ENCODE measurements at regions of chr16 and their contacts with region 1.

Region 1: DNA sequence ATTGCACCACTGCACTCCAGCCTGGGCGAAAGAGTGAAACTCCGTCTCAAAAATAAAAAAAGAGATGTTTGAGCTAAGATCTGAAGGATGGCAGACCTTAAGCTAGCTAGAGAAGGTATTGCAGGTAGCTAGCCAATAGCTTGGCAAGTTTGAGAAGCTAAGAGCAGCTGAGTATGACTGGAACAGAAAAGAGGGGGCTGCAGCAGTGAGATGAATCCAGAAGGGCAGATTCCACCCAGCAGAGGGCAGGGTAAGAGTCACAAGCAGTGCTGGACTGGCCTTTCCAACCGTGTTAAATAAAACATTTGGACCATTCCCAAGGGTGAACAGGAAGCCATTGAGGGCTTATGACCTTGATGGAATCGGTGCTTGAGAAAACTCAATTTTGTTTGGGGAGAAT is 5.7 kb upstream of the PHAF1 start:
- DNase-seq: peak; percentile 16
- ATAC-seq: peak; percentile 42
- H3K4me3 Mint-ChIP-seq: no peak overlapping the region
- H3K27ac Mint-ChIP-seq: no peak overlapping the region
- H3K4me1 Mint-ChIP-seq: peaks cover 5% of the 10 kb centered on the region
- H3K27me3 Mint-ChIP-seq: no peaks in the 10 kb centered on the region

Region 2: DNA sequence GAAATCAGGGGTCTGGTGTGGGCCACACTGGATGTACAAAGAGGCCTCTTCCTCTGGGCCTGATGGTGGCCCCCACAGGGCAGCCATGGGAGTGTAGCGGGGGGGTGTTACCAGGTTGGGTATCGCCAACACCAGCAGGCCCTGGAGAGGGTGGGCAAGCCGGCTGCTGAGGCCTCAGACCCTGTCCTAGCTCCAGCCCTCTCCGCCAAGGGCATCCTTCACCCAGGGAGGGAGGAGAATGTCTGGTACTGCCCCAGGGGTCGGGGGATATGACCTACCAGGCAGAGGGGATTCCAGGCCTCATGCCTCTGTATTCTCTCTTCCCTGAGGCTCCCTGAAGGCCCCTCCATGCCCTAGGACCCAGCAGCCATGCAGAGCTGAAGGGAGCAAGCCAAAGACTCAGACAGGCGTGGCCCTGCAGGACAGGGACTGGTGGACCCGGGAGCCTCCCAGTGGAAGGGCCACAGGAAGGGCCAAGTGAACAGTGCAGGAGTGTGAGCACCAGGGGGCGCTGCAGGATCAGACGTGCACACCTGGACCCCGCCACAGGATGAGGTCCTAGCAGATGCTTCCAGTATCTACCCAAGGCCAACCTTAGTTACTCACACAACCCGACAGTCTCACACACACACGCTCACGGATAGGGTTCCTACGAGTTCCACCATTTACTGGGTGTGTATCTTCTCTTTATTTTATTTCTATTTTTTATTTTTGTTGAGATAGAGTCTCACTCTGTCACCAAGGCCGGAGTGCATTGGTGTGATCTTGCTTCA is 126.5 kb before region 1 on chr16:
- CTCF ChIA-PET with region 1: interaction called, 3 read pairs
- POLR2A ChIA-PET with region 1: no interaction called
- intact Hi-C with region 1: loop called (anchors 1 kb)
- DNase-seq: peak; percentile 96
- ATAC-seq: peak; percentile 97
- H3K4me3 Mint-ChIP-seq: no peak overlapping the region
- H3K27ac Mint-ChIP-seq: peak overlapping the region; percentile 31
- H3K4me1 Mint-ChIP-seq: peaks cover 31% of the 10 kb centered on the region
- H3K27me3 Mint-ChIP-seq: peaks cover 3% of the 10 kb centered on the region

Region 3: DNA sequence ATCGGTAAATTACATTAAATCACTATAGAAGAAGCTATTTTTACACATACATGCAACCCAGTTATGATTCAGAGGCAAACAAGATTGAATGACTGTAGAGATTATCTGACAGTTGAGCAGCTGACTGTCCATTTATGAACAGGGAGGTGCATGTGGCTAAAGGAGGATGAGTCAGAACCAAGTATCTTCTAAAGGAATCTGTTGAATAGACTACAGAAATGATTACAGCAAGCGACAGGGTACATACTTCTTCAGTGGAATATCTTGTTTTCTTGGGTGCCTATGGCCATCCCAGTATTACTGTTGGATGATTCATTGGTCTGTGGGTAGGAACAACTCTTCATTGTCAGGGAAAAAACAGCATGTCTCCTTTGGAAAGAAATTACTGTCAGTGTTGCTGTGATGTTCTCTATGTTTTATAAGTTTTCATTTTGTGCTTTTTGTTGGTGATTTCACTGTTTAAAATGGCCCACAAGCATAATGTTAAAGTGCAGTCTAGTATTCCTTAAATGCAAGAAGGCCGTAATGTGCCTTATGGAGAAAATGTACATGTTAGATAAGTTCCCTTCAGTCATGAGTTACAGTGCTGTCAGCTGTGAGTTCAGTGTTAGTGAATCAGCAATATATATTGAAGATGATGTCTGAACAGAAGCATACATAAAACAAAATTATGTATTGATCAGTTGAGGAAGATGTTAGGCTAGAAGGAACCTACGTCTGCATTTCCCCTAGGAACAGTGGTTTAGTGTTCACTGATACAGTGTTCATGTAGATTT is 48.2 kb before region 1 on chr16:
- CTCF ChIA-PET with region 1: interaction called, 6 read pairs
- POLR2A ChIA-PET with region 1: no interaction called
- intact Hi-C with region 1: loop called (anchors 1 to 5 kb)
- DNase-seq: peak; percentile 34
- ATAC-seq: peak; percentile 89
- H3K4me3 Mint-ChIP-seq: peak overlapping the region; percentile 6
- H3K27ac Mint-ChIP-seq: peak overlapping the region; percentile 84
- H3K4me1 Mint-ChIP-seq: peaks cover 50% of the 10 kb centered on the region
- H3K27me3 Mint-ChIP-seq: no peaks in the 10 kb centered on the region

Region 4: GRCh38 chr16:67082891-67083290 is 21.2 kb before region 1 on chr16:
- CTCF ChIA-PET with region 1: interaction called, 14 read pairs
- POLR2A ChIA-PET with region 1: no interaction called
- intact Hi-C with region 1: no loop called
- DNase-seq: no peak
- ATAC-seq: no peak
- H3K4me3 Mint-ChIP-seq: no peak overlapping the region
- H3K27ac Mint-ChIP-seq: no peak overlapping the region
- H3K4me1 Mint-ChIP-seq: no peaks in the 10 kb centered on the region
- H3K27me3 Mint-ChIP-seq: no peaks in the 10 kb centered on the region

Region 5: GRCh38 chr16:67115639-67116038 is 11.6 kb after region 1 on chr16:
- CTCF ChIA-PET with region 1: interaction called, 10 read pairs
- POLR2A ChIA-PET with region 1: interaction called, 3 read pairs
- intact Hi-C with region 1: no loop called
- DNase-seq: no peak
- ATAC-seq: no peak
- H3K4me3 Mint-ChIP-seq: no peak overlapping the region
- H3K27ac Mint-ChIP-seq: no peak overlapping the region
- H3K4me1 Mint-ChIP-seq: peaks cover 27% of the 10 kb centered on the region
- H3K27me3 Mint-ChIP-seq: no peaks in the 10 kb centered on the region

Region 6: GRCh38 chr16:67726106-67727034 is 622.3 kb after region 1 on chr16:
- CTCF ChIA-PET with region 1: no interaction called
- POLR2A ChIA-PET with region 1: no interaction called
- intact Hi-C with region 1: no loop called
- DNase-seq: no peak
- ATAC-seq: no peak
- H3K4me3 Mint-ChIP-seq: no peak overlapping the region
- H3K27ac Mint-ChIP-seq: no peak overlapping the region
- H3K4me1 Mint-ChIP-seq: no peaks in the 10 kb centered on the region
- H3K27me3 Mint-ChIP-seq: no peaks in the 10 kb centered on the region